ENCODE measurements at regions of chr12 and their contacts with region 1.

Region 1: GRCh38 chr12:54246011-54246641 is 33.8 kb downstream of the CBX5 start:
- DNase-seq: no peak
- H3K4me3 ChIP-seq: no peak overlapping the region
- H3K27ac ChIP-seq: no peak overlapping the region
- H3K4me1 ChIP-seq: no peaks in the 10 kb centered on the region
- H3K27me3 ChIP-seq: no peaks in the 10 kb centered on the region
- CTCF ChIP-seq: no peak

Region 2: GRCh38 chr12:53860426-53861345 is 385.4 kb before region 1 on chr12:
- intact Hi-C with region 1: no loop called
- DNase-seq: no peak
- H3K4me3 ChIP-seq: no peak overlapping the region
- H3K27ac ChIP-seq: no peak overlapping the region
- H3K4me1 ChIP-seq: no peaks in the 10 kb centered on the region
- H3K27me3 ChIP-seq: peaks cover 0 to 14% of the 10 kb centered on the region in 2 donors
- CTCF ChIP-seq: no peak

Region 3: DNA sequence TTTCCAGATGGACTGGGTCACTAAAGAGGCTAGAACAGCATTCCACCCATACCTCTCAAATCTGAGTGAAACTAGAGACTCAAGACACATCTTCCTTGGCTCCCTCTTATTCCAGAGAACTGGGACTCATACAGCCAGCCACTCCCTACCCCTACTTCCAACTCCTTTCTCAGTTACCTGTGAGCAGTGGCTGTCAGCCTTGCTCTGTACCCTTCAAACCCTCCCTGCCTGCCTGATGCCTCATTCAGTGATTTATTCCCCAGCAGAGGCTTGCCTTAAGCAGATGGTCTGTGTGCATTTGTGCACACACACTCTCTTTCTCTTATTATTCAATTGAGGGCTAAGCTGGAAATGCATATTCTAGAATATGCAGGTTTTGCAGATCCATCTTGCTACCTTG is 103.6 kb after region 1 on chr12:
- intact Hi-C with region 1: loop called (anchors 5 kb)
- DNase-seq: no peak
- H3K4me3 ChIP-seq: no peak overlapping the region
- H3K27ac ChIP-seq: no peak overlapping the region
- H3K4me1 ChIP-seq: peaks cover 0 to 22% (median 15%) of the 10 kb centered on the region in 4 donors
- H3K27me3 ChIP-seq: no peaks in the 10 kb centered on the region
- CTCF ChIP-seq: no peak